Heart right ventricle (tissue), 16 donors: ENCODE measurements at regions of chr7 and their contacts with region 1.

Region 1: DNA sequence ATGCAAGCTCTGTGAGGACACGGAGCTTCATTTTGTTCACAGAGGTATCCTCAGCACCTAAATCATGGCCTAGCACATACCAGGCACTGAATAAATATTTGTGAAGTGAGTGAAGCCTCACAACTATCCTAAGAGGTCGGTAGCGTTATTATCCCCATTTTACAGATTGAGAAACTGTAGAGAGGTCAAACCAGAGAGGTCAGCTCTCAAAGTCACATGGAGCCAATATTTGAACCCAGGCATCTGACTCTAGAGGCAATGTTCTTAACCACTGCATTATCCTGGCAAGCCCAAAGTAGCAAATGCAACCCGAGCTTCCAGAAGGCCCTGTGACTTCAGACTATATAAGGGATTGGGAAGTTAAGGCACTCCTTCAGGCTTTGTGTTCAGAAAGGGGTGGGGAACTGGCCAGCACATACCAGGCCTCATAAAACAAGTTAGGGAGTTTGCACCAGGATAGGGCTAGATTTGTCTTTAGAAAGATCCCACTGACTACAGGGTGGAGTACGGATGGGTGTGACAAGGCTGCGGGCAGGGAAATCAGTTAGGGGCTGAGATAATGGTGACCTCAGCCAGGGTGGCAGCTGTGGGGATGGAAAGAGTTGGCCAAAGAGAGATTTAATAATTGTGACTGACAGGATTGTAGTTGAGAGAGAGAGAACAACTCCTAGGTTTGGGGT is 101.4 kb downstream of the TBXAS1 start:
- DNase-seq: no peak
- ATAC-seq: no peak
- H3K4me3 ChIP-seq: no peak overlapping the region
- H3K27ac ChIP-seq: no peak overlapping the region
- H3K4me1 ChIP-seq: no peaks in the 10 kb centered on the region
- H3K27me3 ChIP-seq: no peaks in the 10 kb centered on the region
- CTCF ChIP-seq: no peak

Region 2: GRCh38 chr7:139708541-139708940 is 221.9 kb before region 1 on chr7:
- intact Hi-C with region 1: loop called in 1 of 10 experiments (anchors 5 kb)
- DNase-seq: no peak
- ATAC-seq: peak in 2 of 8 donors; percentile 6 to 10
- H3K4me3 ChIP-seq: no peak overlapping the region
- H3K27ac ChIP-seq: peak overlapping the region in 1 of 10 donors; percentile 36
- H3K4me1 ChIP-seq: peaks cover 11 to 93% (median 66%) of the 10 kb centered on the region in 9 donors
- H3K27me3 ChIP-seq: no peaks in the 10 kb centered on the region
- CTCF ChIP-seq: no peak